Common myeloid progenitor, CD34-positive (primary cell): ENCODE measurements at regions of chr7 and their contacts with region 1.

Region 1: DNA sequence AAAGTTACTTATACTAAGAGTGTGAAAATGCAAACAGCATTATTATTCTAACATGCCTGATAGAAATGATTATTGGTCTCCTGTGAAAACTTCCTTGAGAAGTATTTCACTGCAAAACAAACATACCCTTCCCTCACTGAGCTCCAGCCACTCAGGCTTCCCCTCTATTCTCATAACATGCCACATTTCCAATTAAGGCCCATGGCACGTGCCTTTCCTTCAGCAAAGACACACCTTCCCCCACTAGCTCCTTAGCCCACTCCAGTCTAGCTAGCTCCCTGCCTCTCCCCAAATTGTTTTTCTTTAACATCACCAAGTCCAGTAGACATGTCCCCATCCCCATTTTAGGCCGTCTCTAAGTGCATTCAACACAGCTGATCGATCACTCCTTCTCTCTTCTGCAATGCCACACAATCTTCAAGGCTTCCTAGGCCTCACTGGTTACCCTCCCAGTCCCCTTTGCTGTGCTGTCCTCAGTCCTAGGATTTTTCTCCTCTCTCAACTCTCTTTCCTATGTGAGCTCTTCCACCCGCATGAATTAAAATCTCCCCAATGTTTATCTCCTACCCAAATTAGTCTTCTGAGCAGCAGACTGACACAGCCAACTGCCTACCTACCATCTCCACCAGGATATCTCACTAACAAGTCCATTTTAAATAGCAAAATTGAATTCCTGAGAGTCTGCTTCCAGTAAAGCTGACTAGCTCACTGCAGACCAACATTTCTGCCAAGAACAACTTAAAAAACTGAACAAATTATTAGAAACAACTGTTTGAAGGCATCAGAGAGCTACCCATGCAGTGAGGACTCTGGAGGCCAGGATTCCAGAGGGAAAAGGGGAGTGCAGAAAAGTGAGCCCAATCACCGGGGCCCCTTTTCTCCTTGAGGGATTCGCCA is 11.9 kb downstream of the CYTH3 start:
- DNase-seq: no peak
- H3K4me3 ChIP-seq: no peak overlapping the region
- H3K27ac ChIP-seq: no peak overlapping the region
- H3K4me1 ChIP-seq: peaks cover 24 to 45% (median 34%) of the 10 kb centered on the region in 4 experiments
- H3K27me3 ChIP-seq: no peaks in the 10 kb centered on the region

Region 2: DNA sequence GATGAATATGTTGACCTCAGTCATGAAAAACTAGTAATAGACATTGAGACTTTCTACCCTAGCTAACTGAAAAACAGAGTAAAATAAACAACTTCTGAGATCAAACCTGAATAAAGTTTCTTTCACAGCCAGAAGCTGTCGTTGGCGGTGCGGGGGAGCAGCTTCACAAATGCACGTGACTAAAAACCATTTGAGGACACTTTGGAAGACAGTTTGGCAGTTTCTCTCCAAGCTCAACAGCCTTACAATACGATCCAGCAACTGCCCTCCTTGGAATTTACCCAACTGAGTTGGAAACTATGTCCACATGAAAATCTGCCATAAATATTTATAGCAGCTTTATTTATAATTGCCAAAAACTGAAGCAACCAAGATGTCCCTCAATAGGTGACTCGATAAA is 51.2 kb before region 1 on chr7:
- CTCF ChIA-PET with region 1: no interaction called
- POLR2A ChIA-PET with region 1: no interaction called
- DNase-seq: no peak
- H3K4me3 ChIP-seq: no peak overlapping the region
- H3K27ac ChIP-seq: no peak overlapping the region
- H3K4me1 ChIP-seq: no peaks in the 10 kb centered on the region
- H3K27me3 ChIP-seq: no peaks in the 10 kb centered on the region

Region 3: DNA sequence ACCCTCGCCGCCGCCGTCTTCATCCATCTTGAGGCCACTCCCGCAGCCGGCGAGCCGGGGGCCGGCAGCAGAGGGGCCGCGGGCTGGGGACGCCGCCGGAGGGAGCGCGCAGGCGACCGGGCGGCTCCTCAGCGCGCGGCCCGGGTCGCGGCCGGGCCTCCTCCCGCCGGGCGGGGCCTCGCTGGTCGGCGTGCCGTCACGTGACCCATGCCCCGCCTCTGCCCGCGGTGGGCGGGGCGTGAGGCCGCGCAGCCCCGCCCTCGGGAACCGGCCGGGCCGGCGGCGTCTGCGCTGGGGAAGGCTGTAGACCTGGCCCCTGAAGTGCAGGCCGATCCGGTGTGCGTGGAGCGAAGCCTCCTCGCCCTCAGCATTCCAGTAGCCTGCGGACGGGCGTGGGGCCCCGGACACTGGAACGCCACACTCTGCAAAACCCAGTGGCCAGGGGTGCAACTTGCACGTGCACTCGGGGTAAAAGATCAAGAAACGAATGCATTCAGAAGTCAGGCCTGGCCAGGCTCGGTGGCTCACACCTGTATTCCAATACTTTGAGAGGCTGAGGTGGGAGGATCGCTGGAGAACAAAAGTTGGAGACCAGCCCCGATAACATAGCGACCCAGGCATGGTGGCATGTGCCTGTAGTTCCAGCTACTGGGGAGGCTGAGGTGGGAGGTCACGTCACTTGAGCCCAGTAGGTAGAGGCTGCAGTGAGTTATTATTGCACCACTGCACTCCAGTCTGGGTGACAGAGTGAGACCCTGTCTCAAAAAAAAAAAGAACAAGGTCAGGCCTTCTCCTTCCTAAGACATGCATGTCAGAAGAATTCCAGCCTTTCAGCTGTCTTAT is 12.2 kb after region 1 on chr7 and contains the start of gene CYTH3:
- CTCF ChIA-PET with region 1: interaction called, 18 read pairs
- POLR2A ChIA-PET with region 1: interaction called, 3 read pairs
- DNase-seq: peak; percentile 64 to 79 (median 79)
- H3K4me3 ChIP-seq: peak within 1 kb of the TSS; percentile 51 to 96 (median 80)
- H3K27ac ChIP-seq: peak within 1 kb of the TSS in 1 of 2 experiments; percentile 11
- H3K4me1 ChIP-seq: peaks cover 8 to 23% (median 20%) of the 10 kb centered on the region in 4 experiments
- H3K27me3 ChIP-seq: no peaks in the 10 kb centered on the region